Common myeloid progenitor, CD34-positive (primary cell): ENCODE measurements at regions of chr1 and their contacts with region 1.

Region 1: DNA sequence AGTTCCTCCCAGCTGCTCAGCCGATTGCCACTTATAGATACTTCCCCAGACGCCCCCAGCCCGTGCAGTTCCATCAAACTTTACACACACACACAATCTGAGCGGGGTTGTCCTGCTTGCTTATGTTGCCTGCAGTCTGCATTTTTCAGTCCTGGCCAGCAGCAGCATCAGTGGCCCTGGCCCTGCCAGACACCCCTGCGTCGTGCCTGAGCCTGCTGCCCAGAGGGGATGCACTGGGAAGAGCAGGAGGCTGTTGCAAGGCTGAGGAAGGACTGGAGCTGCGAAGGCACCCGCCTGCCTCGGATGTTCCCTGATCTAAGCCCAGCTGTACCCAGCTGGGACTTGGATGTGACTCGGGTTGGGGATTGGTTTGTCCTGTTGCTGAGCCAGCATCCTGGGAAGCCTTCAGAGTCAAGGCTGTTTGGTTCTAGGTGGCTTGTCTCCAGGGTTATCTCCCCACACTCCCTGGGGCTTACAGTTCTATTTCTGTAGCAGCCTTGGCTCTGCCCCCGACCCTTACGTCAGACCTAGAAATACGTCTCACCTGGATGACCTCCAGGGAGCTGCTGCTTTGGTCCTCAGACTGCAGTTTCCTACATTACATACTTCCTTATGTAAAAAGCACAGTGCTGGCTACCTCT is 42.3 kb downstream of the MAN1C1 start:
- DNase-seq: no peak
- H3K4me3 ChIP-seq: no peak overlapping the region
- H3K27ac ChIP-seq: no peak overlapping the region
- H3K4me1 ChIP-seq: peaks cover 0 to 12% (median 11%) of the 10 kb centered on the region in 4 experiments
- H3K27me3 ChIP-seq: no peaks in the 10 kb centered on the region

Region 2: GRCh38 chr1:25486602-25487001 is 172.3 kb before region 1 on chr1:
- CTCF ChIA-PET with region 1: no interaction called
- POLR2A ChIA-PET with region 1: no interaction called
- DNase-seq: peak in 1 of 3 donors; percentile 41
- H3K4me3 ChIP-seq: no peak overlapping the region
- H3K27ac ChIP-seq: no peak overlapping the region
- H3K4me1 ChIP-seq: peaks cover 11 to 15% (median 13%) of the 10 kb centered on the region in 4 experiments
- H3K27me3 ChIP-seq: no peaks in the 10 kb centered on the region

Region 3: DNA sequence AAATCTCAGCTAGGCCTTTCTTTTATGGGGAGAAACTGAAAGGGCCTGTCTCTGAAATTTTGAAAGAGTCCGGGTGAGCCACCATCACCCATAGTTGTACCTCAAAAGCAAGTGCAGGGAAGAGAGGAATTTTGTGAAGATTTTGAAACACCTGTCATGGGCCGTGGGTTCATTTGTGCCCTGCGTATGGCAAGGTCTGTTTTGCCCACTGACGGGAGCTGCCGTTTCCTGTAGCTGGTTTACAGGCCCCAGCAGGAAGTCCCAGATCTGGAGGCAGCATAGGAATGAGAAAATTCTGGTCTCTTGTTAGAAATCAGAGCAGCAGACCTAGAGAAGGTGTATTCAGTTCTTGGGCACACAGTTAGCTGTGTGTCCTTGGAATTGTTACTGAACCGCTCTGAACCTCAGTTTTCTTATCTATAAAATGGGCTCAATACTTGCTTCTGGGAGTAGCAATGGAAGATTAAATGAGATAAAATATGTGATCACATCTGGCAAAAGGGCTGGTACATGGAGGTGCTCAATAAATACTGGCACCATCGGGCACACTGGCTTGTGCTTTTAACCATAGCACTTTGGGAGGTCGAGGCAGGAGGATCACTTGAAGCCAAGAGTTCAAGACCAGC is 10.2 kb after region 1 on chr1:
- CTCF ChIA-PET with region 1: interaction called, 11 read pairs
- POLR2A ChIA-PET with region 1: interaction called, 4 read pairs
- DNase-seq: no peak
- H3K4me3 ChIP-seq: no peak overlapping the region
- H3K27ac ChIP-seq: no peak overlapping the region
- H3K4me1 ChIP-seq: peaks cover 0 to 3% (median 0%) of the 10 kb centered on the region in 4 experiments
- H3K27me3 ChIP-seq: no peaks in the 10 kb centered on the region